ENCODE measurements at regions of chr2 and their contacts with region 1.

Region 1: GRCh38 chr2:60674524-60675165 is 81.4 kb upstream of the PAPOLG start:
- DNase-seq: peak; percentile 85
- ATAC-seq: peak; percentile 100
- H3K4me3 ChIP-seq: no peak overlapping the region
- H3K4me3 Mint-ChIP-seq: no peak overlapping the region
- H3K27ac ChIP-seq: no peak overlapping the region
- H3K27ac Mint-ChIP-seq: peak overlapping the region; percentile 50
- H3K4me1 ChIP-seq: peaks cover 0 to 3% of the 10 kb centered on the region in 2 donors
- H3K4me1 Mint-ChIP-seq: peaks cover 4% of the 10 kb centered on the region
- H3K27me3 ChIP-seq: peaks cover 0 to 3% (median 0%) of the 10 kb centered on the region in 4 experiments
- H3K27me3 Mint-ChIP-seq: no peaks in the 10 kb centered on the region
- CTCF ChIP-seq: peak; percentile 93

Region 2: DNA sequence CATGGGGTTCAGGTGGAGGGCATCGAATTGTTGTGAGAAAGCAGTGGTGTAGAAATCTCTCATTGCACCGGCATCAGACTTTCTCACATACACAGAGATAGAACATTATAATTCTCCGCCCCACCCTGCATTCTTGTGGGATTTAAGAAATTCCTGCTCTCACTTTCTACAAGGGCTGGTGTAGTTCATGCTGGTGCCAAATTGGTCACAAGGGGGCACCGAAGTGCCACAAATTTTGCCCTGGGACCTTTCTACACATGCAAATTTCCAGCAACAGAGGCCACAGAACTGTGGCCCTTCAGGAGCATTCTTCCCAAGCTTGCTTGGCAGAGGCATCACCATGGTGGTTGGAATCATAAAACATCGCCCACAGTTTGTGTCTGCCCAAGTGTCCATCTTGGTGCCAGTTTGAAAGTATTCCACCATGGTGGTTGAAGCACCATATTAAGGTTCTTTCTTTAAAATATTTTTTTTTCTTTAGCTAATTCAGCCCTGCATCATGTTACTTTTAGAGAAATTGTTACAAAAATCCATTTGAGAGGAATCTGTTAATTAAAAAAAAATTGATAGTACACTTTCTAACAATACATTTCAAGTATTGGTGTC is 1912.4 kb before region 1 on chr2:
- CTCF ChIA-PET with region 1: interaction called, 57 read pairs
- POLR2A ChIA-PET with region 1: no interaction called
- intact Hi-C with region 1: loop called (anchors 1 kb)
- DNase-seq: peak; percentile 65
- ATAC-seq: peak; percentile 74
- H3K4me3 ChIP-seq: no peak overlapping the region
- H3K4me3 Mint-ChIP-seq: no peak overlapping the region
- H3K27ac ChIP-seq: no peak overlapping the region
- H3K27ac Mint-ChIP-seq: no peak overlapping the region
- H3K4me1 ChIP-seq: peaks cover 7 to 8% of the 10 kb centered on the region in 2 donors
- H3K4me1 Mint-ChIP-seq: peaks cover 8% of the 10 kb centered on the region
- H3K27me3 ChIP-seq: no peaks in the 10 kb centered on the region
- H3K27me3 Mint-ChIP-seq: peaks cover 4% of the 10 kb centered on the region
- CTCF ChIP-seq: peak; percentile 82

Region 3: GRCh38 chr2:59301466-59302402 is 1372.9 kb before region 1 on chr2:
- CTCF ChIA-PET with region 1: interaction called, 8 read pairs
- POLR2A ChIA-PET with region 1: no interaction called
- intact Hi-C with region 1: loop called (anchors 2 kb)
- DNase-seq: peak; percentile 80
- ATAC-seq: peak; percentile 91
- H3K4me3 ChIP-seq: no peak overlapping the region
- H3K4me3 Mint-ChIP-seq: no peak overlapping the region
- H3K27ac ChIP-seq: no peak overlapping the region
- H3K27ac Mint-ChIP-seq: no peak overlapping the region
- H3K4me1 ChIP-seq: no peaks in the 10 kb centered on the region
- H3K4me1 Mint-ChIP-seq: no peaks in the 10 kb centered on the region
- H3K27me3 ChIP-seq: no peaks in the 10 kb centered on the region
- H3K27me3 Mint-ChIP-seq: peaks cover 4% of the 10 kb centered on the region
- CTCF ChIP-seq: peak; percentile 74

Region 4: GRCh38 chr2:60581433-60582282 is 93.0 kb before region 1 on chr2:
- CTCF ChIA-PET with region 1: interaction called, 58 read pairs
- POLR2A ChIA-PET with region 1: no interaction called
- intact Hi-C with region 1: loop called (anchors 5 kb)
- DNase-seq: peak; percentile 89
- ATAC-seq: peak; percentile 100
- H3K4me3 ChIP-seq: peak overlapping the region in 4 of 5 experiments; percentile 38 to 61 (median 51)
- H3K4me3 Mint-ChIP-seq: peak overlapping the region; percentile 72
- H3K27ac ChIP-seq: no peak overlapping the region
- H3K27ac Mint-ChIP-seq: no peak overlapping the region
- H3K4me1 ChIP-seq: peaks cover 7 to 10% of the 10 kb centered on the region in 2 donors
- H3K4me1 Mint-ChIP-seq: peaks cover 7% of the 10 kb centered on the region
- H3K27me3 ChIP-seq: peaks cover 0 to 14% (median 0%) of the 10 kb centered on the region in 4 experiments
- H3K27me3 Mint-ChIP-seq: peaks cover 24% of the 10 kb centered on the region
- CTCF ChIP-seq: peak; percentile 98

Region 5: DNA sequence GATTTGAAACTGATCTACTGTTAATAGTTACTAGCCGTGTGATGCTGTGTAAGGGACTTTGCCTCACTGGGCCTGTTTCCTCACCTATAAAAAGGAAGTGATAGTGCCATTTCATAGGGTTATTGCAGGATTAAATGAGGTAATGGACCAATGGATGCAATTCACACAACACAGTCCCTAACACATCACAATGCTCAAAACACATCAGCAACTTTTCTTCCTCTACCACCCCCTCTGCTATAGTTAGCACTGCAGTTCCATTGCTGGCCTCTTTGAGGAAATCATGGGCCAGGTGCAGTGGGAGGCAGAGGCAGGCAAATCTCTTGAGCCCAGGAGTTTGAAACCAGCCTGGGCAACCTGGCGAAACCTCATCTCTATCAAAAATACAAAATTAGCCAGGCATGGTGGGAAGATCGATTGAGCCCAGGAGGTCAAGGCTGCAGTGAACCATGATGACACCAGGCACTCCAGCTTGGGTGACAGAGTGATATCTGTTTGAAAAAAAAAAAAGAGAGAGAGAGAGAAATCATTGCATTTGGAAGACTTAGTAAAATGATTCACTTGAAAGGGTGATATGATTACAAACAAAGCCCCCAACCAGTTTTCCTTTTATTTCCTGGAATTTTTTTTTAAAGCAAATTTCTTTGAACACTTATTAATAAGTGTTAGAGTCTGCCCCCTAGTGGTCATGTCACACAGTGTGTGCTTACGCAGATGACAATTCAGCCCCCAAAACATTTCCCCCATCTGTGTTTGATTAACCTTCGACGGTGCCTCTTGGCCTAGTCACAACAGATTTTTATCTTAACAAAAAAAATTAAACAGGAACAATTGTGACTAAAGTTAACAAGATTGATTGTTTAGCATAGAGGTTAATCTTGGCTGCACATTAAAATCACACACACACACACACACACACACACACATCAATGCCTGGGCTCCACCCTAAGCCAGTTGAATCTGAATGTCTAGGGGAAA is 32.5 kb before region 1 on chr2:
- CTCF ChIA-PET with region 1: interaction called, 135 read pairs
- POLR2A ChIA-PET with region 1: interaction called, 5 read pairs
- intact Hi-C with region 1: loop called (anchors 1 kb)
- DNase-seq: peak; percentile 67
- ATAC-seq: peak; percentile 58
- H3K4me3 ChIP-seq: no peak overlapping the region
- H3K4me3 Mint-ChIP-seq: no peak overlapping the region
- H3K27ac ChIP-seq: no peak overlapping the region
- H3K27ac Mint-ChIP-seq: no peak overlapping the region
- H3K4me1 ChIP-seq: peaks cover 15 to 16% of the 10 kb centered on the region in 2 donors
- H3K4me1 Mint-ChIP-seq: peaks cover 22% of the 10 kb centered on the region
- H3K27me3 ChIP-seq: no peaks in the 10 kb centered on the region
- H3K27me3 Mint-ChIP-seq: peaks cover 3% of the 10 kb centered on the region
- CTCF ChIP-seq: peak; percentile 86

Region 6: DNA sequence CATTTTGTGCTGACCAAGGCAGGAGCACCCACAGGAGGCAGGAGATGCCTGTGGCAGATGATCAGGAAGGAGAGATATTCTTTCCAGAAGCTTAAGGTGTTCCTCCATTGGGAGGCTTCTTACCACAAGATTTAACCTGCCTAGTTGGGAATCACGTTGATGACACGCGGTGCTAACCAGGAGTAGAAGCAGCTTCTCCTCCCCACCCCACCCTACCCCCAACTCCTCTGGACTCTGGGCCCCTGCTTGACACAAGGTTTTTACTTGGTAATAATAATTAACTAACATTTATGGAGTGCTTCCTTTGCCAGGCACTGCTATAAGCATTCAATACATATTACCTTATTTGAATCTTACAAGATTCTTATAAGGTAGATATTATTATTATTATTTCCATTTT is 18.9 kb after region 1 on chr2:
- CTCF ChIA-PET with region 1: interaction called, 10 read pairs
- POLR2A ChIA-PET with region 1: no interaction called
- intact Hi-C with region 1: no loop called
- DNase-seq: no peak
- ATAC-seq: no peak
- H3K4me3 ChIP-seq: no peak overlapping the region
- H3K4me3 Mint-ChIP-seq: no peak overlapping the region
- H3K27ac ChIP-seq: no peak overlapping the region
- H3K27ac Mint-ChIP-seq: no peak overlapping the region
- H3K4me1 ChIP-seq: no peaks in the 10 kb centered on the region
- H3K4me1 Mint-ChIP-seq: no peaks in the 10 kb centered on the region
- H3K27me3 ChIP-seq: no peaks in the 10 kb centered on the region
- H3K27me3 Mint-ChIP-seq: peaks cover 11% of the 10 kb centered on the region
- CTCF ChIP-seq: no peak

Measured in B cell (primary cell).